GM12878 (cell line): ENCODE measurements at regions of chr5 and their contacts with region 1.

Region 1: DNA sequence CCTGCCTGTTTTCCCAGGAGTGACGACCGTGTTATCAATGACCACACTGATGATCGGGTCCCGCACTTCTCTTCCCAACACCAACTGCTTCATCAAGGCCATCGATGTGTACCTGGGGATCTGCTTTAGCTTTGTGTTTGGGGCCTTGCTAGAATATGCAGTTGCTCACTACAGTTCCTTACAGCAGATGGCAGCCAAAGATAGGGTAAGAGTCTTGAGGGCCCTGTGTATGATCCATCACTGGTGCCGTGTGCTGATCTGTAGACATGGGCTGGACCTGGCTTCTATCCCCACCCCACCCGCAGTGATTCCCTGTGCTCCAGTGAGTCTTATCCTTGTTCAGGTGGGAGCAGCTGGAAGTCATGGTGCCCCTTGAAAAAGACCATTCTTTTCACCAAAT is 26.0 kb downstream of the GABRP start:
- DNase-seq: no peak
- ATAC-seq: peak; percentile 79
- H3K4me3 ChIP-seq: no peak overlapping the region
- H3K27ac ChIP-seq: no peak overlapping the region
- H3K4me1 ChIP-seq: no peaks in the 10 kb centered on the region
- H3K27me3 ChIP-seq: no peaks in the 10 kb centered on the region; a peak in 1 of 4 replicates
- CTCF ChIP-seq: peak; percentile 14 to 55 (median 18); a peak in 3 of 6 replicates
- EP300 ChIP-seq: no peak
- POLR2A ChIP-seq: no peak
- RAD21 ChIP-seq: peak; percentile 40

Region 2: GRCh38 chr5:169945831-169946261 is 863.7 kb before region 1 on chr5:
- CTCF ChIA-PET with region 1: no interaction called
- POLR2A ChIA-PET with region 1: no interaction called
- RAD21 ChIA-PET with region 1: no interaction called
- SMC1A ChIA-PET with region 1: no interaction called
- in situ Hi-C with region 1: no loop called
- intact Hi-C with region 1: no loop called
- DNase-seq: no peak
- ATAC-seq: no peak
- H3K4me3 ChIP-seq: no peak overlapping the region
- H3K27ac ChIP-seq: no peak overlapping the region
- H3K4me1 ChIP-seq: no peaks in the 10 kb centered on the region
- H3K27me3 ChIP-seq: no peaks in the 10 kb centered on the region
- CTCF ChIP-seq: no peak
- EP300 ChIP-seq: no peak
- POLR2A ChIP-seq: no peak
- RAD21 ChIP-seq: no peak

Region 3: DNA sequence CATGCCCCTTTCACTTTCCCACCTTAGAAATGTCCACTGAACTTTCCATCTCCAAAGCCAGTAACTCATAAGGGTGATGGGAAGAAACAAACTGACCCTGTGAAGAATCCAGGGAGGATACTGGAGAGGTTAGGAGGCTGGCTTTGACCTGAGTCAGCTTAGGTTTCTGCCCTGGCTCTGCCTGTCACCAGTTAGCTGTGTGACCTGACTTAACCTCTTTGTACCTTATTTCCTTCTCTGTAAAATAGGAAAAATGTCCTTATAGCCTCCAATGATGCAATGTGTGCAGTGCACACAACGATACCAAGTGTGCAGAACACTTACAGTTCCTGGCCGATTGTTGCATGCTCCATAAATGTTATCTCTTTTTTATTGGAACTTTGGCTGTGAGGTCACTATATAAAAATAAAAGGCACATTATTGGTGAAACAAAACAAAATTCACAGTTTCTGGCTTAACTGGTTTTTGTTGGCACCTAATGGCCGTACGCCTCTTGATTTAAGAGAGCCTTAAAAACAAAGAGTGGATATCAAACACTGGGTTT is 11.8 kb after region 1 on chr5:
- CTCF ChIA-PET with region 1: no interaction called
- POLR2A ChIA-PET with region 1: no interaction called
- RAD21 ChIA-PET with region 1: no interaction called
- SMC1A ChIA-PET with region 1: no interaction called
- in situ Hi-C with region 1: no loop called
- intact Hi-C with region 1: no loop called
- DNase-seq: no peak
- ATAC-seq: no peak
- H3K4me3 ChIP-seq: no peak overlapping the region
- H3K27ac ChIP-seq: no peak overlapping the region
- H3K4me1 ChIP-seq: no peaks in the 10 kb centered on the region
- H3K27me3 ChIP-seq: no peaks in the 10 kb centered on the region
- CTCF ChIP-seq: no peak
- EP300 ChIP-seq: no peak
- POLR2A ChIP-seq: no peak
- RAD21 ChIP-seq: no peak

Region 4: DNA sequence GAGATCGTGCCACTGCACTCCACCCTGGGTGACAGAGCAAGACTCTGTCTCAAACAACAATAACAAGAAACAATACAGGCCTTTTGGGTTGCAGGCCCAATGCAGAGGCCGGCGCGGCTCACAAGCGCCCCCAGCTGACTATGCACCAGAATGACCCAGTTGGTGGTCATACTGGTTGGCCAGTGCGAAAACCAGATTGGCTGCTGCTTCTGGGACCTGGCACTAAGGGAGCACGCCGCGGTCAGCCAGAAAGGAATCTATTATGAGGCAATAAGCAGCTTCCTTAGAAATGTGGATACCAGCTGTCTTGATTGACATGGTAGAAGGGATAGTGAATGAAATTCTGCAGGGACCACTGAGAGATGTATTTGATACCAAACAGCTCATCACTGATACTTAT is 87.2 kb after region 1 on chr5:
- CTCF ChIA-PET with region 1: no interaction called
- POLR2A ChIA-PET with region 1: no interaction called
- RAD21 ChIA-PET with region 1: no interaction called
- SMC1A ChIA-PET with region 1: no interaction called
- in situ Hi-C with region 1: no loop called
- intact Hi-C with region 1: loop called (anchors 5 kb)
- DNase-seq: no peak
- ATAC-seq: peak; percentile 41; the same call in 1 of the 3 replicates
- H3K4me3 ChIP-seq: no peak overlapping the region
- H3K27ac ChIP-seq: no peak overlapping the region
- H3K4me1 ChIP-seq: no peaks in the 10 kb centered on the region
- H3K27me3 ChIP-seq: no peaks in the 10 kb centered on the region
- CTCF ChIP-seq: peak; percentile 13 to 38 (median 36); a peak in 4 of 6 replicates
- EP300 ChIP-seq: no peak
- POLR2A ChIP-seq: no peak
- RAD21 ChIP-seq: 0 out of 2 replicates have a peak, but pooled peaks have one; percentile 31

Region 5: GRCh38 chr5:170917113-170917512 is 107.6 kb after region 1 on chr5:
- CTCF ChIA-PET with region 1: no interaction called
- POLR2A ChIA-PET with region 1: no interaction called
- RAD21 ChIA-PET with region 1: no interaction called
- SMC1A ChIA-PET with region 1: no interaction called
- in situ Hi-C with region 1: no loop called
- intact Hi-C with region 1: loop called (anchors 2 kb)
- DNase-seq: no peak
- ATAC-seq: no peak
- H3K4me3 ChIP-seq: no peak overlapping the region
- H3K27ac ChIP-seq: no peak overlapping the region
- H3K4me1 ChIP-seq: no peaks in the 10 kb centered on the region
- H3K27me3 ChIP-seq: no peaks in the 10 kb centered on the region
- CTCF ChIP-seq: no peak; a peak in 1 of 6 replicates
- EP300 ChIP-seq: no peak
- POLR2A ChIP-seq: no peak
- RAD21 ChIP-seq: no peak

Region 6: DNA sequence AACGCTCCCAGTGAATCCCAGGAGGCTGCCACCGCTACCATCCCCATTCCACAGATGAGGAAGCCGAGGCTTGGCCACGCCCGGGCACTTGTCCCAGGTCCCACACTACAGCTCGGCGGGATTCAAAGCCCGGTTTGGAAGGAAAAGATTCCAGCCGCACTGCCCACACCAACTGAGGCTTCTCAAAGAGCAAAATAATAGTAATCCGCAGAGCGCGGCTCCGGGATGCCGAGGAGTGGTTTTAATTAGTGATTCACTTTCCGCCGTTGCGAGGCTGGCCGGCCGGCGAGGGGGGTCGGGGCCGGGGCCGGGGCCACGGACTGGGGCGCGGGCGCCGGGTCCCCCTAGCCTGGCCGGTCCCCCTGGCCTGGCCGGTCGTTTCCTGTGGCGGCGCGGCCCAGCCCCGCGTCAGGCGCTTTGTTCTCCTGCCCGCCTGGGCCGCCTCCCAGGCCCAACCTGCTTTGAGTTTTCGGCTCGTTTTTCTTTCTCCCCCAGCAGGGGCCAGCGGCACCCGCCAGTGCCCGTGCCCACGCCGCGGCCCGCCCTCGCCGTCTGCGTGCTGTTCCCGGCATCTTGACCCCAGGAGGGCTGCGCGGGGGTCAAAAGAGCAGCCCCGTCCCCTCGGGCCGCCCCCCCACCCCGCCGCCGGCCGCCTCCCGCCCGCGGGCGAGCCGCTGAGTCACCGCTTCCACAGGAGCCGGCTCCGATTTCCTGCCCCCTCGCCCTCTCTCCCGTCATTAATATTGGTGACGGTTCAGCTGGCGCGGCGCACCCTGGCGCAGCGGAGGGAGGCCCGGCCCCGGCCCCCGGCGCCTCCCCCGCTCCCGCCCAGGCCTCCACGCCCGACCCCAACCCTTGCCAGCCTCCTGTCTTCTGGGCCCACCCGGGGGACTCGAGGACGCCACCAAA is 641.1 kb after region 1 on chr5:
- CTCF ChIA-PET with region 1: no interaction called
- POLR2A ChIA-PET with region 1: no interaction called
- RAD21 ChIA-PET with region 1: no interaction called
- SMC1A ChIA-PET with region 1: no interaction called
- in situ Hi-C with region 1: no loop called
- intact Hi-C with region 1: no loop called
- DNase-seq: no peak
- ATAC-seq: no peak
- H3K4me3 ChIP-seq: no peak overlapping the region
- H3K27ac ChIP-seq: no peak overlapping the region
- H3K4me1 ChIP-seq: no peaks in the 10 kb centered on the region
- H3K27me3 ChIP-seq: no peaks in the 10 kb centered on the region; a peak in 3 of 4 replicates
- CTCF ChIP-seq: no peak
- EP300 ChIP-seq: no peak
- POLR2A ChIP-seq: no peak
- RAD21 ChIP-seq: no peak